ENCODE measurements at regions of chr1 and their contacts with region 1.

Region 1: DNA sequence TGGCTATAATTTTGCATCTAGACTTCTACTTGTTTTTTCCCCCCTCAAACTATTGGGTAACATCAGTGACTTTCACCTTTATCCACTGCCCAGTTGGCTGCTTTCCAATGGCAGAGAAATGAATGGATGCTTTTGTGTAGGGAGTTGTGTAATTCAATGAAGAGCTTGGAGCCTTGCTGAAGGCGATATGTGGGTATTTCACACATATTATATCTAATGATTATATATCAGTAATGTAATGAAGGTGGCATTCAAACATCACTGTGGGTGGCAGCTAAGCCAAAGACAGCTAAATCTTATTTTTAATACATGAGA is 81.2 kb downstream of the TGFB2 start:
- DNase-seq: peak; percentile 86
- H3K4me3 ChIP-seq: no peak overlapping the region
- H3K27ac ChIP-seq: peak overlapping the region; percentile 57
- H3K4me1 ChIP-seq: peaks cover 31% of the 10 kb centered on the region
- H3K27me3 ChIP-seq: no peaks in the 10 kb centered on the region
- CTCF ChIP-seq: no peak

Region 2: DNA sequence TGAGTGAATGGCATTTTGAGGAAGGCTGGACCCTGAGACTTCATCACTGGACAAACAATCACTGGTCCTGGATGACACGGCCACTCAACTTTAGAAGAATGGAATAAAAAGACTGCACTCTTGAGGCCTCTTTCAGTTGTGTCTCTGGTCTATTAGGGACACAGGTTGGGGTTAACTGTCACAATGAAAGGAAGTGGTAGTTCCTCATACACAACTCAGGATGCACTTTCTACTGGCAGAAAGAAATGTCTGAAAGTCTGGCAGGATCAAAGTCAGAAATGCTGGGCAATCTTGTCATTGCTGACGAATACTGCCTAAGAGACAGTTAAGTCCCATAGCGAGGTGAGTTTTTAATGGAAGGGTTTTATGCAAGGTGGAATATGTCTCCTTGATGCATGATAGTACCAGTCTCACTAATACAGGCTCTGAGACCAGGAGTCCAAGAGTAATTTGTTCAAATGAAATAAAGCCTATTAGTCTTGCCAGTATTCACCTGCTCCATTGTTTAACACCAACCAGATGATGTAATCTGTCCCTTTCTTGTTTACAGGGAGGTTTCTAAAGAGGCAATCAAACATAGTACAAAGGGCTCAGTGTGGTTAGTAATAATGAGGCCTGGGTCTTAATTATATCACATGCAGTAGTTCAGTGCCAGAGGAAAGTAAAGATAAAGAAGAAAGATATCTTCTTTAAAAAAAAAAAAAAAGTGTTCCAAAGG is 152.4 kb before region 1 on chr1:
- CTCF ChIA-PET with region 1: no interaction called
- dilution Hi-C with region 1: no loop called
- in situ Hi-C with region 1: no loop called
- intact Hi-C with region 1: no loop called
- DNase-seq: no peak
- H3K4me3 ChIP-seq: no peak overlapping the region
- H3K27ac ChIP-seq: no peak overlapping the region
- H3K4me1 ChIP-seq: no peaks in the 10 kb centered on the region
- H3K27me3 ChIP-seq: no peaks in the 10 kb centered on the region
- CTCF ChIP-seq: no peak

Region 3: GRCh38 chr1:218304281-218305039 is 121.8 kb before region 1 on chr1:
- CTCF ChIA-PET with region 1: no interaction called
- dilution Hi-C with region 1: no loop called
- in situ Hi-C with region 1: no loop called
- intact Hi-C with region 1: no loop called
- DNase-seq: peak; percentile 5
- H3K4me3 ChIP-seq: no peak overlapping the region
- H3K27ac ChIP-seq: no peak overlapping the region
- H3K4me1 ChIP-seq: no peaks in the 10 kb centered on the region
- H3K27me3 ChIP-seq: no peaks in the 10 kb centered on the region
- CTCF ChIP-seq: no peak

Region 4: DNA sequence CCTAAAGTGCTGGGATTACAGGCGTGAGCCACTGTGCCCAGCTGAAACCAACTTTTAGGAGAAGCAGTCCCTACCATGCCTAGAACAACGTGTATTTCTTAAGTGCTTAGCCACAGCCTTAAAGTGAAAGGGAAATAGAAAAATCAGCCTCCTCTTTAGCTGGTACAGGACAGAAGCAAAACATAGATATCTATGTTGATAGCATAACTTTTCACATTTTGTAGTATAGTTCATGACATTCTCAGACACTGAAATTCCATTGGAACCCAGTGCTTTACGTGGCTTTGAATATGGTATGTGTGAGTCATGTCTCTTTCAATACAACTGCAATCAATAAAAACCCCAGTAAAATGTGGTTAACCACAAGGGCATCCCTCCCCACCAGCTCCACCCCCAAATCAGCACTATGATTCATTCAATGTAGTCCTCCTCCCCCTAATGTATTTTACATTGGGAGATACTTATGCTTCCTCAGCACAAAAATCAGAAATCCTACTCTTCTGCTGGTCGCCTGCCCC is 49.1 kb before region 1 on chr1:
- CTCF ChIA-PET with region 1: no interaction called
- dilution Hi-C with region 1: no loop called
- in situ Hi-C with region 1: no loop called
- intact Hi-C with region 1: loop called (anchors 5 kb)
- DNase-seq: peak; percentile 95
- H3K4me3 ChIP-seq: no peak overlapping the region
- H3K27ac ChIP-seq: peak overlapping the region; percentile 46
- H3K4me1 ChIP-seq: peaks cover 73% of the 10 kb centered on the region
- H3K27me3 ChIP-seq: no peaks in the 10 kb centered on the region
- CTCF ChIP-seq: no peak

Region 5: GRCh38 chr1:218401998-218402785 is 24.1 kb before region 1 on chr1:
- CTCF ChIA-PET with region 1: no interaction called
- dilution Hi-C with region 1: no loop called
- in situ Hi-C with region 1: no loop called
- intact Hi-C with region 1: no loop called
- DNase-seq: no peak
- H3K4me3 ChIP-seq: no peak overlapping the region
- H3K27ac ChIP-seq: no peak overlapping the region
- H3K4me1 ChIP-seq: peaks cover 10% of the 10 kb centered on the region
- H3K27me3 ChIP-seq: no peaks in the 10 kb centered on the region
- CTCF ChIP-seq: no peak

Region 6: DNA sequence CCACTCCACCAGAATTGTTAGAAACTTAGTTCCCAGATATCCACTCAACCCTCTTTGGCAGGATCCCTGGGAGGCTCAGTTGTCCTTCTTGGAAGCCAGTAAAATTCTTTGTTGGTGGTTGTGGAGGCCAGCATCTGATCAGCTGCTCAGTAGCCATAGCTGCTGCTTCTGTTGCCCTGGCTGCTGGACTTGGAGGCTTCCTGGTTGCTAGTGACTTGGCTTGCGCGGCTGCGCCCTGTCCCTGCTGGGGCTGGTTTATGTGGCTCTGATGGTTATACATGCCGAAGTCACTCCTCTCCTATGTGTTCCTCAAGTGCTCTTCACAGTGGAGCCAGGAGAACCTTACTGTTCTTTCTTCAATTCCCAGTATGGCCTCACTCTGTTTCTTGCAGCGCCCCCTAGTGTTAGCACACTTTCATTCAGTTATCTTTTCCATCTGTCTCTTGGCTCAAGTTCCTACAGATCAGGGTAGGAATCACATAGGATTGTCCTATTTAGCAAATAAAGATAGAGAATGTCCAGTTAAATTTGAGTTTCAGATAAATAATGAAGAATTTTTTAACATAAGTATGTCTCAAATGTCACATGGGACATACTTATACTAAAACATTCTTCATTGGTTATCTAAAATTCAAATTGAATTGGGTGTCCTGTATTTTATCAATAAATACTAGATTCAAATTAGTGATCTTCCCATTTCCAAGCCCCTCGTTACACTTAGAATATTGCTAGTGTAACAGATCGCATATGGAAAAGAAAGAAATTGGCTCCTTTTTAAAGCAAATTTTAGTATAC is 95.3 kb after region 1 on chr1:
- CTCF ChIA-PET with region 1: no interaction called
- dilution Hi-C with region 1: no loop called
- in situ Hi-C with region 1: no loop called
- intact Hi-C with region 1: loop called (anchors 10 kb)
- DNase-seq: peak; percentile 35
- H3K4me3 ChIP-seq: no peak overlapping the region
- H3K27ac ChIP-seq: no peak overlapping the region
- H3K4me1 ChIP-seq: no peaks in the 10 kb centered on the region
- H3K27me3 ChIP-seq: no peaks in the 10 kb centered on the region
- CTCF ChIP-seq: peak; percentile 61 to 70

Measured in mammary epithelial cell (primary cell).